ENCODE measurements at regions of chr1 and their contacts with region 1.

Region 1: DNA sequence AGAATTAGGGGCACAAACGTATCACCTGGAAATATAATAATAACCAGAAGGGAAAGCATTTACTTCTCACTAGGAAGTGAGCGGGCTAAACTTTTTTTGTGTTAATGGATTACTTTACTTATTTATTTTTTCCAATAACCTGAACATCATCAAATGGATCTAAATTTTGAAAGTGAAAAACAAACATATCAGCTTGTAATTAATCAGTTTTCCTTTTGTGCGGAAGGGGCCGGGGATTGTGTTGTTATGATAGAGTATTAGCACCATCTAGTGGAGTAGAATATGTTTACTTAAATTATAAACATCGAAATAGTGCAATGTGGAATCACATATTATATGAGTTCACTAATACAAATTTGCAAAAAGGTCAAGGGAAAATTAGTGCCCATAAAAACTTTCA is 9.0 kb downstream of the CFH start:
- DNase-seq: peak; percentile 68
- H3K4me3 ChIP-seq: peak overlapping the region; percentile 74
- H3K27ac ChIP-seq: no peak overlapping the region
- H3K4me1 ChIP-seq: no peaks in the 10 kb centered on the region
- H3K27me3 ChIP-seq: no peaks in the 10 kb centered on the region

Region 2: GRCh38 chr1:196160066-196160795 is 500.6 kb before region 1 on chr1:
- in situ Hi-C with region 1: loop called (anchors 10 kb)
- DNase-seq: peak; percentile 93
- H3K4me3 ChIP-seq: peak overlapping the region; percentile 52
- H3K27ac ChIP-seq: peak overlapping the region; percentile 41
- H3K4me1 ChIP-seq: peaks cover 12% of the 10 kb centered on the region
- H3K27me3 ChIP-seq: no peaks in the 10 kb centered on the region

Region 3: DNA sequence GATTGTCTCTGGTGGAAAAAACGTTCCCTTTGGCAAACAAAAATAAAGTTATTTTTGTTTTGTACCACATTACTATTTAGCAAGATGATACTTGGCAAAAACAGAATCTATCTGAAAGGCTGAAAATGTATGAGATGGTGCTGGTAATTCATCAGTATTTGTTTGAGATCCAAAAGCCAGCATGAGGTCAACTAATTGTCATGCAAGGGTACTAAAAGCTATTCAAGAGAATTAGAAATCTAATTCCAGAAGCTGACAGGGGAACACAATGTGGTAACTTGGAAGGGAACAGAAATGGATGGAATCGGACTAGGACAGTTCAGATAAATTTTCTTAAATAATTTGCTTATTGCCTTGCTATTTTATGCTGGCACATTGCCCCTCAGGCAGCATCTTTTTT is 316.4 kb before region 1 on chr1:
- in situ Hi-C with region 1: loop called (anchors 25 kb)
- DNase-seq: no peak
- H3K4me3 ChIP-seq: no peak overlapping the region
- H3K27ac ChIP-seq: no peak overlapping the region
- H3K4me1 ChIP-seq: no peaks in the 10 kb centered on the region
- H3K27me3 ChIP-seq: no peaks in the 10 kb centered on the region

Region 4: GRCh38 chr1:196557797-196558196 is 103.1 kb before region 1 on chr1:
- in situ Hi-C with region 1: no loop called
- DNase-seq: peak; percentile 25
- H3K4me3 ChIP-seq: peak overlapping the region; percentile 78
- H3K27ac ChIP-seq: no peak overlapping the region; the same call in 1 of the 2 replicates
- H3K4me1 ChIP-seq: peaks cover 12% of the 10 kb centered on the region; the same call in 1 of the 2 replicates
- H3K27me3 ChIP-seq: no peaks in the 10 kb centered on the region